MCF 10A (cell line): ENCODE measurements at regions of chr6 and their contacts with region 1.

Region 1: GRCh38 chr6:131116749-131117360 is 18.4 kb upstream of the AKAP7 start:
- DNase-seq: peak; percentile 69
- H3K4me3 Mint-ChIP-seq: no peak overlapping the region
- H3K27ac Mint-ChIP-seq: no peak overlapping the region
- H3K4me1 Mint-ChIP-seq: peaks cover 5% of the 10 kb centered on the region
- H3K27me3 Mint-ChIP-seq: no peaks in the 10 kb centered on the region
- CTCF ChIP-seq: peak; percentile 51

Region 2: GRCh38 chr6:130900913-130901312 is 215.9 kb before region 1 on chr6:
- CTCF ChIA-PET with region 1: interaction called, 57 read pairs
- POLR2A ChIA-PET with region 1: interaction called, 3 read pairs
- intact Hi-C with region 1: no loop called
- DNase-seq: peak; percentile 77
- H3K4me3 Mint-ChIP-seq: no peak overlapping the region
- H3K27ac Mint-ChIP-seq: no peak overlapping the region
- H3K4me1 Mint-ChIP-seq: peaks cover 19% of the 10 kb centered on the region
- H3K27me3 Mint-ChIP-seq: no peaks in the 10 kb centered on the region
- CTCF ChIP-seq: no peak

Region 3: GRCh38 chr6:131093334-131093733 is 23.5 kb before region 1 on chr6:
- CTCF ChIA-PET with region 1: no interaction called
- POLR2A ChIA-PET with region 1: no interaction called
- intact Hi-C with region 1: no loop called
- DNase-seq: no peak
- H3K4me3 Mint-ChIP-seq: no peak overlapping the region
- H3K27ac Mint-ChIP-seq: no peak overlapping the region
- H3K4me1 Mint-ChIP-seq: no peaks in the 10 kb centered on the region
- H3K27me3 Mint-ChIP-seq: no peaks in the 10 kb centered on the region
- CTCF ChIP-seq: no peak

Region 4: GRCh38 chr6:131167773-131168172 is 50.9 kb after region 1 on chr6:
- CTCF ChIA-PET with region 1: interaction called, 3 read pairs
- POLR2A ChIA-PET with region 1: no interaction called
- intact Hi-C with region 1: loop called (anchors 5 kb)
- DNase-seq: no peak
- H3K4me3 Mint-ChIP-seq: no peak overlapping the region
- H3K27ac Mint-ChIP-seq: no peak overlapping the region
- H3K4me1 Mint-ChIP-seq: peaks cover 7% of the 10 kb centered on the region
- H3K27me3 Mint-ChIP-seq: no peaks in the 10 kb centered on the region
- CTCF ChIP-seq: no peak

Region 5: GRCh38 chr6:131844243-131844841 is 727.5 kb after region 1 on chr6:
- CTCF ChIA-PET with region 1: no interaction called
- POLR2A ChIA-PET with region 1: no interaction called
- intact Hi-C with region 1: no loop called
- DNase-seq: peak; percentile 63
- H3K4me3 Mint-ChIP-seq: no peak overlapping the region
- H3K27ac Mint-ChIP-seq: peak overlapping the region; percentile 22
- H3K4me1 Mint-ChIP-seq: peaks cover 13% of the 10 kb centered on the region
- H3K27me3 Mint-ChIP-seq: no peaks in the 10 kb centered on the region
- CTCF ChIP-seq: no peak